Breast epithelium (tissue), 4 donors: ENCODE measurements at regions of chr10 and their contacts with region 1.

Region 1: GRCh38 chr10:33391596-33392465 is 57.4 kb upstream of the NRP1 start:
- DNase-seq: no peak
- H3K4me3 ChIP-seq: no peak overlapping the region
- H3K27ac ChIP-seq: no peak overlapping the region
- H3K4me1 ChIP-seq: no peaks in the 10 kb centered on the region
- H3K27me3 ChIP-seq: no peaks in the 10 kb centered on the region
- CTCF ChIP-seq: no peak
- POLR2A ChIP-seq: no peak

Region 2: DNA sequence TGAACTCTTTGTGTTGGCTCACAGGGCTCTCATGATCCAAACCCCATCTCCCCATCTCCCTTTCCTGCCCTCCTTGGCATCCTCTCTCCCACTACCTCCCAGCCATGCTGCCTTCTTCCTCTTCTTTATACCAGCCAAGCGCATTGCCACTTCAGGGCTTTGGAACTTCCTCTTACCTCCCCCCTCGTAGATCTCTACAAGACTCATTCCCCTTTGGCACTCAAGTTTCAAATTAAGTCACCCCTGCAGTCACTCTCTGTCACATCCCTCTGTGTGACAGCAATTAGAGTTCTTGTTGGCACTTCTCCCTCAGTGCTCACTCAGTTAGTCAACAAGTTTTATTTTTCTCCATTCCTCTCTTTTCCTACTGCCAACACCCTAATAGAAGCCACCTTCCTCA is 36.6 kb before region 1 on chr10:
- intact Hi-C with region 1: no loop called
- DNase-seq: no peak
- H3K4me3 ChIP-seq: no peak overlapping the region
- H3K27ac ChIP-seq: no peak overlapping the region
- H3K4me1 ChIP-seq: no peaks in the 10 kb centered on the region
- H3K27me3 ChIP-seq: no peaks in the 10 kb centered on the region
- CTCF ChIP-seq: no peak
- POLR2A ChIP-seq: no peak

Region 3: DNA sequence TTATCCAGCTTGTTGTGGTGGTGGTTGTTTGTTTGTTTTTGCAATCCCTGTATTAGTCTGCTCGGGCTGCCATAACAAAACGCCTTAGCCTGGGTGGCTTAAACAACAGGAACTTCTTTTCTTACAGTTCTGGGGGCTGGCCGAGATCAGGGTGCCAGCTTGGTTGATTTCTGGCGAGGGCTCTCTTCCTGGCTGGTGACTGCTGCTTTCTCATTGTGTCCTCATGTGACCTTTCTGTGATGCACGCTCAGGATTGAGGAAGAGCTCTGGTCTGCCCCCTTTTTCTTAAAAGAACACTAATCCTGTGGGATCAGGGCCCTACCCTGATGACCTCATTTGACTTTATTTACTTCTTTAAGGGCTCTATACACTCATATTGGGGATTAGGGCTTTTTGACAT is 49.7 kb after region 1 on chr10:
- intact Hi-C with region 1: no loop called
- DNase-seq: no peak
- H3K4me3 ChIP-seq: no peak overlapping the region
- H3K27ac ChIP-seq: no peak overlapping the region
- H3K4me1 ChIP-seq: no peaks in the 10 kb centered on the region
- H3K27me3 ChIP-seq: no peaks in the 10 kb centered on the region
- CTCF ChIP-seq: no peak
- POLR2A ChIP-seq: no peak

Region 4: GRCh38 chr10:33460505-33461294 is 68.9 kb after region 1 on chr10:
- intact Hi-C with region 1: loop called (anchors 2 kb)
- DNase-seq: no peak
- H3K4me3 ChIP-seq: no peak overlapping the region
- H3K27ac ChIP-seq: peak overlapping the region; percentile 13 to 38
- H3K4me1 ChIP-seq: no peaks in the 10 kb centered on the region
- H3K27me3 ChIP-seq: no peaks in the 10 kb centered on the region
- CTCF ChIP-seq: no peak
- POLR2A ChIP-seq: no peak